ENCODE measurements at regions of chr1 and their contacts with region 1.

Region 1: GRCh38 chr1:10796019-10796944 is at the start of gene CASZ1:
- DNase-seq: no peak
- H3K4me3 Mint-ChIP-seq: peak within 1 kb of the TSS; percentile 75
- H3K27ac Mint-ChIP-seq: no peak within 1 kb of the TSS
- H3K4me1 Mint-ChIP-seq: peaks cover 9% of the 10 kb centered on the region
- H3K27me3 Mint-ChIP-seq: peaks cover 66% of the 10 kb centered on the region
- total RNA-seq, gene CASZ1: 8.6 and 9.9 TPM in 2 replicates

Region 2: GRCh38 chr1:10867138-10867721 is 70.9 kb after region 1 on chr1:
- intact Hi-C with region 1: loop called (anchors 5 kb)
- DNase-seq: peak; percentile 50
- H3K4me3 Mint-ChIP-seq: peak overlapping the region; percentile 52
- H3K27ac Mint-ChIP-seq: no peak overlapping the region
- H3K4me1 Mint-ChIP-seq: peaks cover 15% of the 10 kb centered on the region
- H3K27me3 Mint-ChIP-seq: peaks cover 69% of the 10 kb centered on the region

Region 3: DNA sequence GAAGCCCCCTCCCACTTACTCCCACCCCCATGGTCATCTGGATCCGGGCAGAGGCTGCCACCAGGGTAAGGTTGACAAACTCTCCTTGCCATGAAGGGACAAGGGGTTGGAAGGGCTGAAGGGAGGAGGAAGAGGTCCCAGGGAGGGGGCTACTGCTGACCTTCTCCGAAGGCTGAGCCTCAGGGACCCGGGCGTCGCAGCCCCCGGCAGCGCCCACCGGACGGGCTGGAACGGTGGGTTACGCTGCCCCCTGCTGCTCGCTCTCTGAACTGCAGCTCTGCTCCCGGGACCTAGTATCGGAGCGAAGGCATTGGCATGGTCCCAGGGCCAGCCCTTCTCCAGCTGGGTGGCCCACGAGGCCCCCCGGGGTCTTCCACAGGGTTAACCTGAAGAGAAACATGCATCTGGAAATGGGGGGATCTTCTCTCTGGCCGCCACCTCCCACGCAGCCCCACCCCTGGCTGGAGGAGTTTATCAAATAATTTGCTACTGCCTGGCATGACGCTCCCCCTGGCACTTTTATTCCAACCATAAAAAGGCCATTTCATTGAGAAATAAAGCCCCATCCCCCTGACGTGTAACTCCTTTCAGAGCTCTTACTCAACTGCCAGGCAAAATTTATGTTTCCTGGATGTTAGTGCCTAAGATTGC is 145.7 kb after region 1 on chr1:
- intact Hi-C with region 1: loop called (anchors 10 kb)
- DNase-seq: peak; percentile 40
- H3K4me3 Mint-ChIP-seq: no peak overlapping the region
- H3K27ac Mint-ChIP-seq: no peak overlapping the region
- H3K4me1 Mint-ChIP-seq: peaks cover 27% of the 10 kb centered on the region
- H3K27me3 Mint-ChIP-seq: peaks cover 62% of the 10 kb centered on the region

Measured in activated T-helper 2 cell treated with anti-CD3 and anti-CD28 coated beads, Interferon-gamma antibody, Interleukin-2, Interleukin-4, amounts not matched to agents 10 μg/mL and 5 μg/mL and 100 μg/mL, durations not matched to agents 14 hours and 24 hours and 36 hours (primary cell).